Right ventricle myocardium superior (tissue), 1 donor: ENCODE measurements at regions of chr17 and their contacts with region 1.

Region 1: GRCh38 chr17:49496183-49496866 is 1.2 kb downstream of the NGFR start:
- DNase-seq: peak; percentile 89
- ATAC-seq: peak; percentile 94

Region 2: GRCh38 chr17:49390548-49391324 is 105.6 kb before region 1 on chr17:
- intact Hi-C with region 1: no loop called
- DNase-seq: peak; percentile 50
- ATAC-seq: peak; percentile 57

Region 3: DNA sequence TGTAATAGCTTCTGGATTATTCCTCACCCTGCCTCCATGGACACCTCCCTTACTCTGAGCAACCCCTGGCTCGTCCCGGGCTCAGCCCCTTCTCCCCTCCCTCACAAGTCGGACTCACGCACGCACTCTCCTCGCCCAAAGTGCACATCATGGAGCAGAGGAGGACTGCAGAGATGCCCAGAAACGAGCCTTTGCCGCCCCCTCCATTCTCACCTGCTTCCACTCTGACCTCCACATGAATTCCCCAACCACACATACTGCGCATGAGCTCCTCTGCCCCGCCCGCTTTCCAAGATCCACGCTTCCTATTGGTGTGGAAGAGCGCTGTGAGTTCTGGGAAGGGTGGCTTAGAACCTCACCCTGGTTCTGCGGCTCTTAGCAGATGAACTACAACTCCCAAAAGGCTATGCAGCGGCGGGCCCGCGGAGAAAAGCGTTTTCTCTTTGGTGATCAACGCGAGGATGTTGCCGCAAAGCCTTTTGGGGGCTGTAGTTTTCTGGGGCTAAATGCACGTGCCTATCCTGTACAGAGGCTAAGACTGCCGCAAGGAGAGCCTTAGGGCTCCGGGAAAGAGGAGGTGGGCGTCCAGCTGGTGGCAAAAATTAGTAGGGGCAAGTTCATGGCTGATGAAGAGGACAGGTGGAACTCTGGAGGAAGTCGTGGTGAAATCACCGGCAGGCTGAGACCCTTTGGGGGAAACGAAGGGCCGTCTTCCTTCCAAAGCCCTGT is 81.5 kb before region 1 on chr17 and contains the start of gene PHB1:
- intact Hi-C with region 1: no loop called
- DNase-seq: peak; percentile 97
- ATAC-seq: peak; percentile 100
- total RNA-seq, gene PHB1: 236 TPM

Region 4: DNA sequence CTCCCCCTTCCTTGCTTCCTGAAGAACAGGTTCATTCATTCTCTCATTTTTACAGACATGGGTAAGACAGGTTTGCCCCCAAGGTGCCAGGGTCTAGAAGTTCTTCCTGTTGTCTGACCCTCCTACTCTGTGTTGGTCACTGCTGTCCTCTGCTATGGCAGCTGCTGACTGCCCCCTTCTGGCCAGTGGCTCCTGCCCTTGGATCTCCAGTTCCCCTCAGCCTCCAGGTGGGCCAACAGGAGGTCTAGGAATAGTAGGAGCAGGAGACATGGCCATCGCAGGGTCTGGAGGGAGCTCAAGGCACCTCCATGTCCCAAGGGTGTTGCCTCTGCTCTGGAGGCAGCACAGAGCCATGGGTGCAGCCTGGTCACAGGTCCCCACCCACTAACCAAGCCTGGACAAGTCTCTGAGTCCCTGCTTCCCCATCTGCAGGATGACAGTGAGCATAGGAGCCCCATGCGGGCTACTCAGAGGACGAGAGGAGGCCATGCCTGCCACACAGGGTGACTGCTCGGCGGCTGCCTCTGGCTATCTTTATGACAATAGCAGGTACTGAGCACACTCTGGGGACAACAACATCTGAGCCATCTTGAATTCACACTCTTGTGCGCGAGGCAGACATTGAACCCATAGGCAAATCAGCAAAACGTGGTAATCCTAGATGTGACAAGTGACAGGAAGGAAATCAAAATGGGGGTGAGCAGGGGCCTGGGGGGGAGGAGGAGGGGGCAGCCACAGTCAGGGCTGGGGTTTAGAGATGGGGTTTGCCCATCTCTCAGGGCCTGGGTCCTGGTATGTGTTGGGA is 52.4 kb after region 1 on chr17:
- intact Hi-C with region 1: loop called (anchors 5 kb)
- DNase-seq: peak; percentile 79
- ATAC-seq: peak; percentile 78

Region 5: DNA sequence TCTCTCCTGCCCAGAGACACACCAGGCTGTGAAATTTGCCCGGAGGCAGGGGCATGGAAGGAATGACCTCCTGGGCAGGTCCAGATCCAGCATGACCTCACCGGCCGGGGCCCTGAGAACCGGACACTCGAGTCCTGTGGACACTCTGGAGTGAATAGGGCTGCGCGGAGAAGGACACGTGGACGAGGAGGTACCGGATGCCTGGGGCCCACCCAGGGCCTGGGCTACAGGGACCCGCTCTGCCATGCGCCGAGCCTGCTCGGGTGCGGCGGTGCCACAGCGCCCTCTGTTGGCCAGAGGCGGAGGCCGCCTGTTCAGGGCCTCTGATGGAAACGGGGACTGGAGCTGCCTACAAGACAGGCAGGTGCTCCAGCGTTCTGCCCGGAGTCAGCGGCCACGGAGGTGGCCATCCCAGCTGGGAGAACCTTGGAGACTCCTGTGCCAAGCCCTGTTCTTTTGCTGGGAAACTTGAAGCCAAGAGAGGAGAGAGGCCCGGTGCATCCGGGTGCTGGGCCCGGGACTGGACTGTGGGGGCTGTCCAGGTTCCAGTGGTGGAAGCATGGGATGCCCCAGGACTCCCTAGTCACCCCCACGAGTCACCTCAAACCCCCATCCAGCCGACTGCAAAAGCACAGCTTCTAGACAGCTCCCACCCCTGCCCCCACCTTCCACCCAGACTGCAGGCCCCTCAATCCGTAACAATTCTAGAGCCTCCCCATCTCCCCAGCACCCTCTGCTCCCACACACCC is 60.1 kb after region 1 on chr17:
- intact Hi-C with region 1: loop called (anchors 2 kb)
- DNase-seq: peak; percentile 87
- ATAC-seq: peak; percentile 95

Region 6: DNA sequence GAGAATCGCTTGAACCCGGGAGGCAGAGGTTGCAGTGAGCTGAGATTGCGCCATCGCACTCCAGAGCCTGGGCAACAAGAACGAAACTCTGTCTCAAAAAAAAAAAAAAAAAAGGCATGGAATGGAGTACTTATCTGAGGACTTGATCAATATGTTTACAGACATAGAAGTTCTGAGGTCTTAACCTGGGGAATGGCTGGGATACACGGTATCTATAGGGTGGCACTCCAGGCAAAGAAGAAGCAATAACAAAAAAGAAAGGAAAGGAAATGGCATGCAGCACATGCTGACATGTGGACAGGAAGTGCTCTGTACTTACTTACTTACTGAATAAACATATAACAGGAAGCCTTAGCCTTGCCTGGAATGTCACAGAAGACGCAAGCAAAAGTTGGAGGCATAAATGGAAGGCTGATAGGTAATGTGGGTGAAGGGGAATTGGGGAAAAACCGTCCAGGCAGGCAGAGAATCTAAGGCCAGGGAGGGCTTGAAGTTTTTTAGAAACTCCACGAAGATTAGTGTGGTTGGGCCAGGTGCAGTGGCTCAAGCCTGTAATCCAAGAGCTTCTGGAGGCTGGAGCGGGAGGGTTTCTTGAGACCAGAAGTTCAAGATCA is 191.7 kb after region 1 on chr17:
- intact Hi-C with region 1: no loop called
- DNase-seq: no peak
- ATAC-seq: no peak

Region 7: DNA sequence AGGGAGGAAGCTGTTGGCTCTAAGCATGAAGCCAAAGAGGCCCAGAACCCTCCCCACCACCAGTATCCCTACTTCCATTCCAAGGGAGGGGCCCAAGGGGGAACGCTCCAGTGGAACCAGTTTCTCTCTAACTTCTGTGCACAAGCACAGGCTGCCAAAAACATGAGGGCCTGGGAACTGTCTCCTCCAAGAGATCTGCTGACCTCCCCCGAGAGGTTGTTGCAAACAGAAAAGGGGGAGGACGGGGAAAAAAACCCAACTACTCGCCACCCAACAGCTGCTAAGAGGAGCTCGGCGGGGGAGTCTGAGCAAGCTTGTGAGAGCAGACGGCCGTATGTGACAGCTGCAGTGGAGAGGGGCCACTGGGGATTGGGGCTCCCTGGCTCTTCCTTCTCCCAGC is 227.1 kb after region 1 on chr17:
- intact Hi-C with region 1: no loop called
- DNase-seq: peak; percentile 82
- ATAC-seq: peak; percentile 89